Mammary epithelial cell (primary cell): ENCODE measurements at regions of chr10 and their contacts with region 1.

Region 1: DNA sequence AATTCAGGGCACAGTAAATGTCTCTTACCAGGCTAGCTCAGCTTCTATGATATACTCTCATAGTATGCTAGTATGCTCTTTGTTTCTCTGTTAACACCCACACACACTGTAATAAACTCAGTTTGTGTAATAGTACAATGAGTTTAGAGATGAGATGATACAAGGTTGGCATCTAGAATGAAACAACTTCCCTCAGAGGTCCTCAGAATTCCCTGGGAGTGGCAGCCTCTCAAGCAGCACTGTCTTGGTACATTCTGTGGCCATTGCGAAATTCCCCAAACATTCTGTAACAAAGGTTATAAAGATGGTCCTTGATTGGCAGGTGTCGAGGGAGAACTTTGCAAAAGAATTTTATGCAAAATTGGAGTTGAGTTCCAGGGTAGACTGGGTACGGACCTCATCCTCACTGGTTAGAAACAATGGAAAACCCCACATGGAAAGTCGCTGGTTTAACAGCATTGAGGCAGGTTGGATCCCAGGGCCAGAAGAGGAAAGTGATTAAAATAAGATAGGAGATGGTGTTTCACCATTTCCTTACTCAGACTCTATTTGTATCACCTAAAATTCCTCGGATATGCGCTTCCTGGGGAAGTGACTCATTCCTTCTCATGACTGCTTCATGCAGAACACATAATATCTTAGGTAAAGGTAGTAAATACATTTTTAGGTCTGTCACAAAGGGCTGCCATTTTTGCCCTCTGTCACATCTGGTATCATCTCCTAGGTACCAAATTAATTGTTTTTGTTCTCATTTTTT is 657.8 kb downstream of the SORCS1 start:
- DNase-seq: peak; percentile 84
- H3K4me3 ChIP-seq: no peak overlapping the region
- H3K27ac ChIP-seq: peak overlapping the region; percentile 92
- H3K4me1 ChIP-seq: peaks cover 31% of the 10 kb centered on the region
- H3K27me3 ChIP-seq: no peaks in the 10 kb centered on the region
- CTCF ChIP-seq: no peak

Region 2: DNA sequence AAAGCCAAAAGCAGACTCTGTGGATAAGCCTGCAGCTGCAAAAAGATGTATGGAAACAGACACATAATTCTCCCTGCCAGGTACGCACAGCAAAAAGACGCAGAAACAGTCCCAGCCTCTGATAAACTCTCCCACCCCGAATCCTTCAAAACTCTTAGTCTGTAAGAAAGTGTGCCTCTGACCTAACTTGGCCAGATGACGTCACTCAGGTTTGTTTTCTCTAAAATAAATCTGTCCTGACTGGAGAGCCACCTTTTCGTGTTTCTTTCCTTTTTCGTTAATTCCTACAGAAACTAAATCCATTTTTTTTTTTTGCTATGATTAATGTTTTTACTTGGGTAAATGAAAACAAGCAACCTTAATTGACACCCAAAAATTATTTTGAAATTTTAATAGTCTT is 135.9 kb before region 1 on chr10:
- CTCF ChIA-PET with region 1: no interaction called
- dilution Hi-C with region 1: no loop called
- in situ Hi-C with region 1: no loop called
- intact Hi-C with region 1: no loop called
- DNase-seq: no peak
- H3K4me3 ChIP-seq: no peak overlapping the region
- H3K27ac ChIP-seq: no peak overlapping the region
- H3K4me1 ChIP-seq: no peaks in the 10 kb centered on the region
- H3K27me3 ChIP-seq: no peaks in the 10 kb centered on the region
- CTCF ChIP-seq: no peak

Region 3: DNA sequence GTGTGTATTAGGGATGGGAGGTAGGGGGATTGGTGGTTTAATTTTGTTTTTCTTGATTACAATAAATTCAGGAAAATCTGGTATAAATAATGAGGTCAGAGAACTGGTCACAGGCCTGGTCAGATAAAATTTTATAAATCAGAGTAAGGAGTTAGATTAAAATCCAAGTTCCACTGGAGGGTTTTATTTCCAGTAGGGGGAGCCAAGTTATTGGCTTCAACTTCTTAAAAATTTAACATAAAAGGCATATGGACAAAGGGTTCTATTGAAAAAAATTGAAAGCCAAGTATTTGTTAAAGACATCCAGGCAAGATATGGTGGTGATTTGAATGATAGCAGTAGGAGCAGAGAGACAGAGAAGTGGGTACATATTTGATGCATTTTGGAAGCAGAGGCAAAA is 105.5 kb before region 1 on chr10:
- CTCF ChIA-PET with region 1: no interaction called
- dilution Hi-C with region 1: no loop called
- in situ Hi-C with region 1: no loop called
- intact Hi-C with region 1: loop called (anchors 5 kb)
- DNase-seq: peak; percentile 26
- H3K4me3 ChIP-seq: no peak overlapping the region
- H3K27ac ChIP-seq: no peak overlapping the region
- H3K4me1 ChIP-seq: peaks cover 10% of the 10 kb centered on the region
- H3K27me3 ChIP-seq: no peaks in the 10 kb centered on the region
- CTCF ChIP-seq: peak; percentile 40 to 54

Region 4: DNA sequence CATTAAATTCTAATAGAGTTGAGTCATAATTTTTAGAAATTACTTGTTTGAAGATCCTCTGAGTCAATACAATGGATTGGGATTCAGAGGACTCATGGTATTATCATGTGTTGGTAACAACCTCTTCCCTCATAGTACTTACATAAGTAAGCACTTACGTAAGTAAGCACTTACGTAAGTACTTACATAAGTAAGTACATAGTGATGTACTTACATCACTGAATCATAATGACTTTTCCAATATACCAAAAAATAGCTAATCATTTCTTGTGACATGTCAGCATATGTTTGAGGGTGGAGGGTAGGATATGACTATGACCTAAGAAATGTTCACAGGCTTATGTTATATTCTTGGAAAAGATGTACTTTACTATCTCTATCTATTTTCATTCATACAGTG is 82.6 kb before region 1 on chr10:
- CTCF ChIA-PET with region 1: no interaction called
- dilution Hi-C with region 1: no loop called
- in situ Hi-C with region 1: no loop called
- intact Hi-C with region 1: loop called (anchors 5 kb)
- DNase-seq: peak; percentile 95
- H3K4me3 ChIP-seq: no peak overlapping the region
- H3K27ac ChIP-seq: peak overlapping the region; percentile 97
- H3K4me1 ChIP-seq: peaks cover 21% of the 10 kb centered on the region
- H3K27me3 ChIP-seq: no peaks in the 10 kb centered on the region
- CTCF ChIP-seq: no peak